Ascending aorta (tissue), 2 donors: ENCODE measurements at regions of chr17 and their contacts with region 1.

Region 1: DNA sequence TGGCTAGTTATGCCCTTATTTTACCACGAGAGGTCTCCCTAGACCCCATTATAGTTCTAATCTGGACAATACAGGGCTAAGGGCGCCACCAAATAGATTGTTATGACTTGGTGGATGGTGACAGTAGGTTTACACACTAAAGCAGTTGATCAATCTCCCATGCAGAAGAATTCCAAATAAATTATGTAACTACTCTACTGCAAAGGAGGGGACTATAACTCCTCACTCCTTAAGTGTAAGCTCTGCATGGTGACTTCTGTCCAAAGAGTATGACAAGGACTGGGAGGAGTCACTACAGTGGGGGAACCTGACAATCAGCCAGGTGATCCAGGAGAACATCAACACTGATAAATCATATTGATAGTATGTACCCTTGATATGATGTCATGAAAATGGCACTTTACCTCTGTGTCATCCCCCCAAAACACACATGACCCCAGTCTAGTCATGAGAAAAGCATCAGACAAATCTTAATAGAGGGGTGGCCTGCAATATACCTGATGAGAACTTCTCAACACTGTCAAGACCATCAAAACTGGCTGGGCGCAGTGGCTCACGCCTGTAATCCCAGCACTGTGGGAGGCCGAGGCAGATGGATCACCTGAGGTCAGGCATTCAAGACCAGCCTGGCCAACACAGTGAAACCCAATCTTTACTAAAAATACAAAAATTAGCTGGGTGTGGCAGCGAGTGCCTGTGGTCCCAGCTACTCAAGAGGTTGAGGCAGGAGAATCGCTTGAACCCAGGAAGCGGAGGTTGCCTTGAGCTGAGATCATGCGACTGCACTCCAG is 20.1 kb upstream of the YPEL2 start:
- DNase-seq: peak in 1 of 2 donors; percentile 69
- H3K4me3 ChIP-seq: no peak overlapping the region
- H3K27ac ChIP-seq: peak overlapping the region; percentile 3 to 10
- H3K4me1 ChIP-seq: peaks cover 0 to 6% of the 10 kb centered on the region in 2 donors
- H3K27me3 ChIP-seq: no peaks in the 10 kb centered on the region
- CTCF ChIP-seq: peak; percentile 77 to 89 (median 80)

Region 2: GRCh38 chr17:59296771-59297500 is 14.4 kb before region 1 on chr17:
- intact Hi-C with region 1: no loop called
- DNase-seq: no peak
- H3K4me3 ChIP-seq: no peak overlapping the region
- H3K27ac ChIP-seq: no peak overlapping the region
- H3K4me1 ChIP-seq: no peaks in the 10 kb centered on the region
- H3K27me3 ChIP-seq: no peaks in the 10 kb centered on the region
- CTCF ChIP-seq: no peak

Region 3: DNA sequence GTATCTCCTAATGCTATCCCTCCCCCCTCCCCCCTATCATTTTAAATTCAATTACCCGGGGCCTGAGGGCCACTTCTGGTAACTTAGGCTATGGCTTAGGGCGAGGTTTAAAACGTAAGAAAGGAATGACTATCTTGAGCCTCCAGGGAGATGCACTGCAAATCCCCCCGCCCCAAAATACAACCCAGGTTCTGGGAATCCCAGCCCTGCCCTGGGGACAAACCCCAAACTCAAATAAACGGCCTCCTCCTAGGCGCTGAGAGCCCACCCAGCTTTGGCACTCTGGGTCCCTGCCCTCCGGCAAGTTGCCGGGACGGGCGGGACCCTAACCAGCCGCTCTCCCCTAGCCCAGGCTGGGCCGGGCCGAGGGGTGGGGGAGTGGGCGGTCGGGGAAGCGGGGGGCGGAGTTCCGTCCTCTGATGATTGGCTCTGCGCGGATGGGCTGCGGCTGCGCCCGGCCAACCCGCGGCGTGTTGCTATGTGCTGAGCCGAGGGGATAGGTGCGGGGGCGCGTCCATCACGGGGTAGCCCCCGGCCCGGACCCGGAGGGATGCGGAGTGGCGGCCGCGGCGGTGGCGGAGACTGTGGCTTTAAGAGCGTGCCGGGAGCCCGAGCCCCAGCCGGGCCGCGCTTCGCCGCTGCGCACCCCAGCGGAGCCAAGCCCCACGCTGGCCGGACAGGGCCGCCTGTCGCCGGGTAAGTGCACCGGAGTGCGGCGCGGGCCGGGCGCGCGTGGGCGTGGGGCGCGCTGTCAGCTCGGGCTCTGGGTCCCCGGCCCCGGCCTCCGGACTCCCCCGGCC is 20.0 kb after region 1 on chr17 and contains the start of gene YPEL2:
- intact Hi-C with region 1: no loop called
- DNase-seq: peak; percentile 87 to 97
- H3K4me3 ChIP-seq: peak within 1 kb of the TSS; percentile 85 to 99
- H3K27ac ChIP-seq: peak within 1 kb of the TSS; percentile 97 to 99
- H3K4me1 ChIP-seq: peaks cover 14 to 51% of the 10 kb centered on the region in 2 donors
- H3K27me3 ChIP-seq: no peaks in the 10 kb centered on the region
- CTCF ChIP-seq: no peak
- total RNA-seq, gene YPEL2: 10.5 TPM

Region 4: DNA sequence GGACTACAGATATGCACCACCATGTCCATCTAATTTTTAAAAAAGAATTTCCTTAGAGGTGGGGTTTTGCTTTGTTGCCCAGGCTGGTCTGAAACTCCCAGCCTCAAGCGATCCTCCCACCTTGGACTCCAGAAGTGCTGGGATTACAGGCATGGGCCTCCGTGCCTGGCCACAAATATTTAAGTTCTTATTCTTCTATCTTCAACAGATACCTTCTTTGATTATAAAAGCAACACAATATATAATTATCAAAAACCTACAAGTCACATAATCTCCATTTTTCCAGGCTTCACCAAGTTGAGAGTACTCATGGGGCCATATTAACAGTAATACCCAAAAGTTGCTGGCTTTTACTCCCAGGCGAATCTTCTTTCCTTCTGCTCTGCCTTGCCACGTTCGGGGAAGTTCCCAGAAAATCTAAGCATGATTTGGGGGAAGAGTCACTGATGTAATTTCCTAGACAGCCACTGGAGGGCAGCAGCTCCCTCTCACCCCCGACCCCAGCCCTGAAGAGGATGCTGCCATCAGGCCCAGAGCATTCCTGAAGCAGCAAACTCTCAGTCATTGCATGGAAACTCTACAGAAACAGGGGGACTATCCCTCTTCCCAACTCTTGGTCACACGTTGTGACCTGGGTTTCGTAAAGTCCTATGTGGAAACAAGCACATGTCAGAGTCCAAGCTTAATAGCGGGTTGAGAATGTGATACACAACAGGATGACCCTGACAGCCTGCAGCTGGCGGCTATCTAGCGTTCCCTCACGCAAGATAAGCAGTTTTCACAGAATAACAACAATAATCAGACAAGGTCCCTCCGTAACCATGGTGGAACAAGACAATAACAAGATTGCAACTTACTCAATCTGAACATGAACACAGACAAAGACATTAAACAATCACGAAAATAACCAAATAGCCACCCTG is 210.1 kb after region 1 on chr17:
- intact Hi-C with region 1: loop called (anchors 1 kb)
- DNase-seq: peak in 1 of 2 donors; percentile 72
- H3K4me3 ChIP-seq: no peak overlapping the region
- H3K27ac ChIP-seq: no peak overlapping the region
- H3K4me1 ChIP-seq: peaks cover 0 to 4% of the 10 kb centered on the region in 2 donors
- H3K27me3 ChIP-seq: no peaks in the 10 kb centered on the region
- CTCF ChIP-seq: peak; percentile 65 to 89 (median 89)

Region 5: DNA sequence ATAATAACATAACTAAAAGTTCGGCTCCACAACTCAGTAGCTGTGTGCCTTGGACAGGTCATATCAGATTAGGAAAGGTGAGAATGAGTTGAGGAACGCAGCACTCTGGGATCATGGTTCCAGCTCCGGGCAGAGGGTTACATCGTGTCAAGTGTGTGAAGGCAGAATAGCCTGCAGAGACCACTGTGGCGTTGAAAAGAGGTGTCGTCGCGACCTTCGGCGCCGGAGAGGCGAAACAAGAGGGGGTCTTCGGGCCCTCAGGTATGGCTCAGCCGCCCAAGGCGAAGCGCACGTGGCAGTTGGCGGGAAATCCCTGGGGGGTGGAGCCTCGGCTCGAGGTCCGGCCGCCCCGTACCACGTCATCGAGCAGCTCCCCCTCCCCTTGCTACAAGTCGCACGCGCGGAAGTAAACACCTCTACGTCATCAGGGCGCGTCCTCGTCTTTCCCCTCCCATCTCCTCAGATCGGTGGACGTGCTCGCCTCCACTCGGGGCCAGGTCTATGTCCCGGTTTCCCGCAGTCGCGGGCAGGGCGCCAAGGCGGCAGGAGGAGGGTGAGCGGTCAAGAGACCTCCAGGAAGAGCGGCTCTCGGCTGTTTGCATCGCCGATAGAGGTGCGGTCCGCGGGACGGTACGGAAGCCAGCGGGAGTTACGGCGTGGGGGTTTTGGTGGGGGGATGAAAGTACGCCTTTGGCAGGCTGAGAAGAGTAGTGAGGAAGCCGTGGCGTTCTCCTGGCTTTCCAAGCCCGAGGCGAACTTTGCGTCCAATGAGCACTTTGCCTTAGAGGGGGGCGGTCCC is 254.0 kb after region 1 on chr17 and contains the start of gene DHX40:
- intact Hi-C with region 1: loop called (anchors 2 kb)
- DNase-seq: peak; percentile 78 to 98
- H3K4me3 ChIP-seq: peak within 1 kb of the TSS; percentile 57 to 100
- H3K27ac ChIP-seq: peak within 1 kb of the TSS; percentile 81 to 97
- H3K4me1 ChIP-seq: peaks cover 0 to 8% of the 10 kb centered on the region in 2 donors
- H3K27me3 ChIP-seq: no peaks in the 10 kb centered on the region
- CTCF ChIP-seq: no peak
- total RNA-seq, gene DHX40: 4.8 TPM